ENCODE measurements at regions of chr20 and their contacts with region 1.

Region 1: GRCh38 chr20:47196091-47197081 is 160.1 kb downstream of the ZMYND8 start:
- DNase-seq: peak; percentile 76
- ATAC-seq: peak; percentile 82 to 86

Region 2: GRCh38 chr20:47379433-47380150 is 183.2 kb after region 1 on chr20:
- intact Hi-C with region 1: loop called (anchors 1 to 5 kb)
- DNase-seq: no peak
- ATAC-seq: peak in 1 of 2 donors; percentile 69

Measured in left cardiac atrium (tissue), 4 donors.